ENCODE measurements at regions of chr1 and their contacts with region 1.

Region 1: DNA sequence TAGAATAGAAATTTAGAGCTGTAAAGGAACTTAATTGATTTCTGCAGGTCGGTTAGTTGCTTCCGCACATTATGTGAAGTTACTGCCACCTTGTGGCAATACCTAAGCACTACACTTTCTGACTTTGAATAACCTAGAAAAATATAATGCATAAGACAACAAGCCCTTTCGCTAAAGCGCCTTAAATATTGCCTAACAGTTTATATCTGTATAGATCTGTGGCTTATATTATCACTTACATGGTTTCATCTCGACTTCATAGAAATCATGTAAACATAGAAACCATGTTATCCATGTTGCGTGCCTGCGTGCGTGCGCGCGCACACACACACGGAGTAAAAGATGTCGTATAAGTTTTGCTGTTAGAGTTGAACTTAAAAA is 10.9 kb upstream of the IFI16 start:
- DNase-seq: peak; percentile 50
- H3K4me3 ChIP-seq: peak overlapping the region; percentile 43 to 52 (median 48)
- H3K27ac ChIP-seq: peak overlapping the region; percentile 56
- H3K4me1 ChIP-seq: peaks cover 27% of the 10 kb centered on the region
- H3K27me3 ChIP-seq: no peaks in the 10 kb centered on the region
- CTCF ChIP-seq: peak; percentile 78 to 83

Region 2: GRCh38 chr1:158203693-158204457 is 794.9 kb before region 1 on chr1:
- CTCF ChIA-PET with region 1: no interaction called
- dilution Hi-C with region 1: no loop called
- in situ Hi-C with region 1: loop called in 1 of 2 experiments (anchors 25 kb)
- intact Hi-C with region 1: loop called (anchors 1 kb)
- DNase-seq: peak; percentile 48
- H3K4me3 ChIP-seq: no peak overlapping the region
- H3K27ac ChIP-seq: no peak overlapping the region
- H3K4me1 ChIP-seq: no peaks in the 10 kb centered on the region
- H3K27me3 ChIP-seq: no peaks in the 10 kb centered on the region
- CTCF ChIP-seq: peak; percentile 65 to 76

Region 3: GRCh38 chr1:158407092-158407491 is 591.7 kb before region 1 on chr1:
- CTCF ChIA-PET with region 1: no interaction called
- dilution Hi-C with region 1: no loop called
- in situ Hi-C with region 1: no loop called
- intact Hi-C with region 1: no loop called
- DNase-seq: no peak
- H3K4me3 ChIP-seq: no peak overlapping the region
- H3K27ac ChIP-seq: no peak overlapping the region
- H3K4me1 ChIP-seq: no peaks in the 10 kb centered on the region
- H3K27me3 ChIP-seq: peaks cover 1% of the 10 kb centered on the region
- CTCF ChIP-seq: no peak

Region 4: DNA sequence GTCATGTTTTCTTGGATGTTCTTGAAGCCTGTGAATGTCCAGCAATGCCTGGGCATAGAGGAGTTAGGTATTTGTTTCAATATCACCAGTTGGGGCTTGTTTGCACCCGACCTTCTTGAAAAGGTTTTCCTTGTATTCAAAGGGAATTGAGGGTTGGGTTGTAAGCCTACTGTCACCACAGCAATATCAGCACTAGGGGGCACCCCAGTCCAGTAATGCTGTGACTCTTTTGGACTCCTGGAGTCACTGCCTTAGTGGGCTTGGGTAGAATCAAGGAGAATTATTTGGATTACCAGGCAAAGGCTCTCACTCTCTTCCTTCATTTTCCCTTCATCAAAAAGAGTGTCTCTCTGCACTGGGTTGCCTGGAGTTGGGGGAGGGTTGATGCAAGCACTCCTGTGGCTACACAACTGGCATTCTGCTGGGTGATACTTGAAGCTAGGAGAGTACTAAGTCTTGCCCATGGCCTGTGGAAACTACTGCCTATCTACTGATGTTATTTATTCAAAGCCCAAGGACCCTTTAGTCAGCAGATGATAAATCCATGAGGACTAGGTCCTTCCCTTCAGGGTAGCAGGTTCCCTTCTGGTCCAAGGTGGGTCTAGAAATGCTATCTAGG is 492.3 kb before region 1 on chr1:
- CTCF ChIA-PET with region 1: no interaction called
- dilution Hi-C with region 1: no loop called
- in situ Hi-C with region 1: loop called (anchors 10 to 25 kb)
- intact Hi-C with region 1: loop called (anchors 1 kb)
- DNase-seq: peak; percentile 32
- H3K4me3 ChIP-seq: no peak overlapping the region
- H3K27ac ChIP-seq: no peak overlapping the region
- H3K4me1 ChIP-seq: no peaks in the 10 kb centered on the region
- H3K27me3 ChIP-seq: no peaks in the 10 kb centered on the region
- CTCF ChIP-seq: peak; percentile 68 to 79

Region 5: DNA sequence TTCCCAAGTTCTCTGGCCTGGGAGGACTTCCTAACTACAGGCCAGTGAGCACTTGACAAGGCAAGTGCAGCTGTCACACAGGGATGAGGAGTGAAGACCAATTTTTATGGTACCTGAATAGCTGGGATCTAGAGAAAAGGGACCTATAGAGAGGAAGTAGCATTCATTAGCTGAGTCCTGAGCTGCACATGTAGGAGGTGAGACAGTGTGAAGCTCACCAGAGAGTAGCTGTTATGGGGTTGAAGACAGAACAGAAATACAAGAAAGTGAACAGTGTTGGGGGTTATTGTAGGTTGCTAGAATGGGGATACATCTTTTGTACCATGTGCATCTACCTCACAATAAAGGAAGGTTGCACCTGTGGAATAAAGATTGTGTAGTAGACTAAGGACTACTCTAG is 105.1 kb before region 1 on chr1:
- CTCF ChIA-PET with region 1: no interaction called
- dilution Hi-C with region 1: no loop called
- in situ Hi-C with region 1: no loop called
- intact Hi-C with region 1: no loop called
- DNase-seq: no peak
- H3K4me3 ChIP-seq: no peak overlapping the region
- H3K27ac ChIP-seq: no peak overlapping the region
- H3K4me1 ChIP-seq: no peaks in the 10 kb centered on the region
- H3K27me3 ChIP-seq: no peaks in the 10 kb centered on the region
- CTCF ChIP-seq: no peak

Region 6: GRCh38 chr1:159009704-159010361 is 11.1 kb after region 1 on chr1 and contains the start of gene IFI16:
- CTCF ChIA-PET with region 1: no interaction called
- dilution Hi-C with region 1: no loop called
- in situ Hi-C with region 1: no loop called
- intact Hi-C with region 1: loop called (anchors 1 kb)
- DNase-seq: peak; percentile 94
- H3K4me3 ChIP-seq: peak within 1 kb of the TSS; percentile 54 to 84 (median 79)
- H3K27ac ChIP-seq: peak within 1 kb of the TSS; percentile 96
- H3K4me1 ChIP-seq: peaks cover 18% of the 10 kb centered on the region
- H3K27me3 ChIP-seq: no peaks in the 10 kb centered on the region
- CTCF ChIP-seq: no peak
- total RNA-seq, gene IFI16: 57.0 to 93.4 TPM

Region 7: GRCh38 chr1:159056069-159056698 is 57.4 kb after region 1 on chr1:
- CTCF ChIA-PET with region 1: no interaction called
- dilution Hi-C with region 1: no loop called
- in situ Hi-C with region 1: no loop called
- intact Hi-C with region 1: no loop called
- DNase-seq: no peak
- H3K4me3 ChIP-seq: no peak overlapping the region
- H3K27ac ChIP-seq: no peak overlapping the region
- H3K4me1 ChIP-seq: peaks cover 19% of the 10 kb centered on the region
- H3K27me3 ChIP-seq: no peaks in the 10 kb centered on the region
- CTCF ChIP-seq: no peak

Measured in mammary epithelial cell (primary cell).